ENCODE measurements at regions of chr1 and their contacts with region 1.

Region 1: DNA sequence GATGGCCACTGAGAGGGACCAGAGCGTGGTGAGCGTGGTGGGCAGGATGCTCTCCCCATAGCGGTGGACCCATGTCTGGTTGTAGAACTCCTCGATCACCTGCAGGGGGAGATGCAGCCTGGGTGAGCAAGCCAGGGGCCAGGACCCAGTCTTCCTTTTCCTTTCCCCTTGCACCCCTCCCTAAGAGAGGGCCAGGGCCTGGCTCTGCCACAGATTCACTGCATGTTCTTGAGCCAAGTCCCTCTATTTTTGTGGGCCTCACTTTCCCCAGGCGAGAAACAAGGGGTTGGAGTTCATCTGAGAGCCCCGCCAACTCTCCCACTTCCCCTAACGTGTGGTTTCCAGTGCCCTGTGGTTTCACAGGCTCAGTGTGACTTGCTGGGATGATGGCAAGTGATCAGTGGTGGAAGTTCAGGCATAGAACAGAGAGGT is 27.5 kb downstream of the SLC2A1 start:
- DNase-seq: peak; percentile 74
- ATAC-seq: peak; percentile 57
- H3K4me3 Mint-ChIP-seq: peak overlapping the region; percentile 82
- H3K27ac Mint-ChIP-seq: peak overlapping the region; percentile 98
- H3K4me1 Mint-ChIP-seq: peaks cover 73% of the 10 kb centered on the region
- H3K27me3 Mint-ChIP-seq: no peaks in the 10 kb centered on the region

Region 2: DNA sequence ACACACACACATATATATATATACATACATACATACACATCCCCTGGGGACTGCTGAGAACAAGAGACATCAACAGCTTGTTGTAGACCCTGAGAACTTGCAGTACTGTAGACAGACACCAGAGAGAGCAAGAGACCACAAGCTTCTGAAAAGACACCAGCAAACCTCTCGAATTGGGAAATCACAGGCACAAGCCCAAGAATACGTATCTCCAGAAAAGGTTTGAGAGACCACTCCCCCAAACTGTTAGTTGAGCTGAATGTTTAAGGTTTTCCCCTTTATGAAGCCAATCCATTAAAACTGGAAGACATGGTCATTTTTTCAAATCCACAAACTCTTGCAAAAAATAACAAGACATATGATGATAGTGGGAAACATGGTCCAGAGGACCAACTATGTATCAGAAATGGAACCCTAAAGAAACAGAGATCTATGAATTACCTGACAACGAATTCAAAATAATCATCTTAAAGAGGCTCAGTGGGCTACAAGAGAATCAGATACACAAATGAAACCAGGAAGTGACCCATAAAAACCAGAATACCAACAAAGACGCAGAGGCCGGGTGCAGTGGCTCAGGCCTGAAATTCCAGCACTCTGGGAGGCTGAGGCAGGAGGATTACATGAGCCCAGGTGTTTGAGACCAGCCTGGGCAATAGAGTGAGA is 17.6 kb before region 1 on chr1:
- POLR2A ChIA-PET with region 1: no interaction called
- DNase-seq: no peak
- ATAC-seq: peak; percentile 68
- H3K4me3 Mint-ChIP-seq: no peak overlapping the region
- H3K27ac Mint-ChIP-seq: no peak overlapping the region
- H3K4me1 Mint-ChIP-seq: peaks cover 5% of the 10 kb centered on the region
- H3K27me3 Mint-ChIP-seq: peaks cover 8% of the 10 kb centered on the region

Region 3: DNA sequence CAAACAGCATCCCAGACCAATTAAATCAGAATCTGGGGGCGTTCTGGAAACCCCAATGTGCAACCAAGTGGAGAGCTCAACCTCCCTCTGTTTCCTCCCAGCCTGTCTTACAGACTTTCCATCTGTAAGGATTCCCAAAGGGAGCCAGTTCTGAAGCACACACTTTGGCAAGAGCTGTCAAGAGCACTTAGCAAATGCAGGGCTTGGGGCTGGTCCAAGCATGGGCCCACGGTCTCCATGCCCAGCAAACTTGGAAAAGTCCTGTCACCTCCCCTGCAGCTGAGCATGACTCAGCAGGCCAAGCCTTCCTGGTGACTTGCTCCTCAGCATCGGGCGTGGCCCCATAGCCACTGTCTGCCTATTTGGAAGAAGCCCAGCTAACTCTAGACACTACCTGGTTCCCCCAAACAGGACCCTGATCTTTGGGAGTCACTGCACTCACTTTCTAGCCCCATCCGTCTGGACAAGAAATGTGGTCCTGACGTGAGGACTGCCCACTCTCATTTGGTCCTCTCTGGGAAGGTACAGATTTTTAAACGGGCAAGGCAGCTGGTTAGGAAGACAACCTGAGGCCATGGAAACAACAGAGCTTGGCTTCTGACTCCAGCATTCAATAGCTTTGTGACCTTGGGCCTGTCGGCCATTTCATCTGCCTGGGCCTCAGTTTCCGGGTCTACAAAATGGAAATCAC is 10.7 kb after region 1 on chr1:
- POLR2A ChIA-PET with region 1: interaction called, 18 read pairs
- DNase-seq: no peak
- ATAC-seq: no peak
- H3K4me3 Mint-ChIP-seq: peak overlapping the region; percentile 50
- H3K27ac Mint-ChIP-seq: peak overlapping the region; percentile 85
- H3K4me1 Mint-ChIP-seq: peaks cover 92% of the 10 kb centered on the region
- H3K27me3 Mint-ChIP-seq: no peaks in the 10 kb centered on the region

Region 4: DNA sequence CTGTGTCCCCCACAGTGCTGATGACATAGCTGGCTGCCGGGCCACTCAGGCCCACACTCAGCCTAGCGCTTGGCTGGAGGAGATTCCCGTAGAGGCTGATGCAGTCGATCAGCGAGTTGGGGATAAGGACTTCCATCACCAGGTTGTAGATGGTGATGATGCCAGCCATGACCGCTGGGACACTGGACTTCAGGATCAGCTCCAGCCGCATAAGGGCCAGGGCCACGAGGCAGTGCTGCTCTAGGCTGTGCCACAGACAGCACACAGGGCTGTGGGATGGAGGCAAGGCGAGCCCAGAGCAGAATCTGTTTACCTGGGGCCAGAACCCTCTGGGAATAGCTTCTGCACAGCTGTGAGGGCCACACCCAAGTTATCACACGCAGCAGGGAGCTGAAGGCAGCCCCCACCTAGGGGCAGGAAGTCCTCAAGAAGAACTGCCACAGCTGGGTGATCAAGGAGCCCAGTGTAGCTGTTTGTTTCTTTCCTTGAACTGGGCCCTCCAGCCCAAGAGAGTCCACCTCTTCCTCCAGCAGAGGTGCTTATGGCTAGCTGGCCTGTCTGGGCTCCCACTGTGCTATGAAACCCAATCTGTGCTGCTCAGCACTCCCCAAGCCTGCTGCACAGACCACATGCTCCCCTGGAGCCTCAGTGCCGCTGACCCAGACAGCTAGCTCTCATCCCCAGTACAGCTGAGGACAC is 21.3 kb after region 1 on chr1:
- POLR2A ChIA-PET with region 1: interaction called, 35 read pairs
- DNase-seq: no peak
- ATAC-seq: peak; percentile 67
- H3K4me3 Mint-ChIP-seq: peak overlapping the region; percentile 78
- H3K27ac Mint-ChIP-seq: peak overlapping the region; percentile 85
- H3K4me1 Mint-ChIP-seq: peaks cover 72% of the 10 kb centered on the region
- H3K27me3 Mint-ChIP-seq: no peaks in the 10 kb centered on the region

Region 5: DNA sequence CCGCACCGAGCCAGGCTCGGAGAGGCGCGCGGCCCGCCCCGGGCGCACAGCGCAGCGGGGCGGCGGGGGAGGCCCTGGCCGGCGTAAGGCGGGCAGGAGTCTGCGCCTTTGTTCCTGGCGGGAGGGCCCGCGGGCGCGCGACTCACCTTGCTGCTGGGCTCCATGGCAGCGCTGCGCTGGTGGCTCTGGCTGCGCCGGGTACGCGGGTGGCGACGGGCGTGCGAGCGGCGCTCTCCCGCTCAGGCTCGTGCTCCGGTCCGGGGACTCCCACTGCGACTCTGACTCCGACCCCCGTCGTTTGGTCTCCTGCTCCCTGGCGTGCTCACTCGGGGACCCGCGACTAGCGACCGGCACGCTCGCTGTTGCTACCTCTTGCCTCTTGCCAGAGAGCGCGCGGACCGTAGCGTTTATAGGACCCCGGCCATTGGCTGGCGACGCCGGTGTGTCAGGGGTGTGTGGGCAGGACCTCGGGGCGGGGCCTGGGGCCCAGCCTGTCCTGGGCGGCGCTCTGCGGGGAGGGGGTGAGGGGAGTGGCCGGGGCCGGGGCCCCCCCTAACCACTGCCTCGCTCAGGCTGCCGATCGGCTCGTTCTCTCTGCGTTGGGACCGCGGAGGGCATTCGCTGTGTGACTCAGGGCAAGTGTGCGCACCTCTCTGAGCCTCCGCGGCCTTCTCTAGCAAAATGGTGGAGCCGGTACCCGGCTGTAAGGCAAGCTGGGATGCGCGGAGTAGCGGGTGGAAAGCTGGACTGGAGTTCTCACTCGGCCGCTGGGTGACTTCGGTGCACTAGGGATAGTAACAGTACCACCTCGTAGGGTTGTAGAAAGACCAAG is 27.6 kb after region 1 on chr1 and contains the start of gene SLC2A1:
- POLR2A ChIA-PET with region 1: interaction called, 30 read pairs
- DNase-seq: peak; percentile 94
- ATAC-seq: peak; percentile 87
- H3K4me3 Mint-ChIP-seq: peak within 1 kb of the TSS; percentile 97
- H3K27ac Mint-ChIP-seq: peak within 1 kb of the TSS; percentile 96
- H3K4me1 Mint-ChIP-seq: peaks cover 40% of the 10 kb centered on the region
- H3K27me3 Mint-ChIP-seq: no peaks in the 10 kb centered on the region
- total RNA-seq, gene SLC2A1: 80.8 to 82.3 TPM